ENCODE measurements at regions of chr12 and their contacts with region 1.

Region 1: GRCh38 chr12:110468212-110469048 is at the starts of genes FAM216A and GPN3:
- DNase-seq: peak; percentile 96
- H3K4me3 Mint-ChIP-seq: peak within 1 kb of the TSS; percentile 96
- H3K27ac Mint-ChIP-seq: peak within 1 kb of the TSS; percentile 95
- H3K4me1 Mint-ChIP-seq: peaks cover 31% of the 10 kb centered on the region
- H3K27me3 Mint-ChIP-seq: no peaks in the 10 kb centered on the region
- total RNA-seq, gene FAM216A: 40.8 and 45.9 TPM in 2 replicates
- total RNA-seq, gene GPN3: 50.3 and 55.5 TPM in 2 replicates

Region 2: DNA sequence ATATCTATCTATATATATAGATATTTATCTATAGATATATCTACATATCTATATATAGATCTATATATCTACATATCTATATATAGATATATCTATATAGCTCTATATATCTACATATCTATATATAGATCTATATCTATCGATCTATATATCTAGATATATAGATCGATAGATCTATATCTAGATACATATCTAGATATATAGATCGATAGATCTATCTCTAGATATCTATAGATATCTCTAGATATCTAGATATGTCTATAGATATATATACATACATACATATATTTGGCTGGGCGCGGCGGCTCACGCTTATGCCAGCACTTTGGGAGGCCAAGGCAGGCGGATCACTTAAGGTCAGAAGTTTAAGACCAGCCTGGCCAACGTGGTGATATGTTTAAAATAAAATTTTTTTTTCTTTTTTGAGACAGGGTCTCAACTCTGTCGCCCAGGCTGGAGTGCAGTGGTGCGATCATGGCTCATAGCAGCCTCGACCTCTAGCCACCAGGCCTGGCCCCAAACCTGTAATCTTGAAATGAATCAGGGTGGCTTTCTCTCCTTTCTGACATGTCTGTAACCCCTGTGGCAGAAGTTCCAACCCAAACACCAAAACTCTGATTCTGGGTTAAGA is 36.4 kb before region 1 on chr12:
- intact Hi-C with region 1: loop called (anchors 1 kb)
- DNase-seq: no peak
- H3K4me3 Mint-ChIP-seq: no peak overlapping the region
- H3K27ac Mint-ChIP-seq: no peak overlapping the region
- H3K4me1 Mint-ChIP-seq: no peaks in the 10 kb centered on the region
- H3K27me3 Mint-ChIP-seq: peaks cover 4% of the 10 kb centered on the region

Region 3: GRCh38 chr12:110555577-110556406 is 87.4 kb after region 1 on chr12:
- intact Hi-C with region 1: loop called (anchors 1 kb)
- DNase-seq: no peak
- H3K4me3 Mint-ChIP-seq: no peak overlapping the region
- H3K27ac Mint-ChIP-seq: peak overlapping the region; percentile 57
- H3K4me1 Mint-ChIP-seq: peaks cover 58% of the 10 kb centered on the region
- H3K27me3 Mint-ChIP-seq: no peaks in the 10 kb centered on the region

Region 4: DNA sequence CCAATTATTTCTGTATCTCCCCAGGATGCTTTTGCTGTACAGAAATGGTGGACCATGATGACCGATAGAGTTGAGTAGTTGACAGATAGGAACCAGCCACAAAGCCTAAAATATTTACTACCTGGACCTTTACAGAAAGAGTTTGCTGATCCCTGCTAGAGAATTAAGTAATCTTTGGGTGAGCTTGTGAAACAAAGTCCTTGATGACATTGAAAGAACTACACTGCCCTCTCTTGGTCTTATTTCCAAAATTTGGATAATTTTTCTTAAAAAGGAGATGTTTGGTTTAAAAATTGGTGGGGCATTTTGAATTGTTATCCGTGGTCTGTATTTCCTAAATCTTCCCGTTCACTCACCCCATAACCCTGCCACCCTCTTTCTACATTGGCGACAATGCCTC is 131.8 kb after region 1 on chr12:
- intact Hi-C with region 1: loop called (anchors 1 kb)
- DNase-seq: no peak
- H3K4me3 Mint-ChIP-seq: no peak overlapping the region
- H3K27ac Mint-ChIP-seq: no peak overlapping the region
- H3K4me1 Mint-ChIP-seq: peaks cover 12% of the 10 kb centered on the region
- H3K27me3 Mint-ChIP-seq: no peaks in the 10 kb centered on the region

Region 5: DNA sequence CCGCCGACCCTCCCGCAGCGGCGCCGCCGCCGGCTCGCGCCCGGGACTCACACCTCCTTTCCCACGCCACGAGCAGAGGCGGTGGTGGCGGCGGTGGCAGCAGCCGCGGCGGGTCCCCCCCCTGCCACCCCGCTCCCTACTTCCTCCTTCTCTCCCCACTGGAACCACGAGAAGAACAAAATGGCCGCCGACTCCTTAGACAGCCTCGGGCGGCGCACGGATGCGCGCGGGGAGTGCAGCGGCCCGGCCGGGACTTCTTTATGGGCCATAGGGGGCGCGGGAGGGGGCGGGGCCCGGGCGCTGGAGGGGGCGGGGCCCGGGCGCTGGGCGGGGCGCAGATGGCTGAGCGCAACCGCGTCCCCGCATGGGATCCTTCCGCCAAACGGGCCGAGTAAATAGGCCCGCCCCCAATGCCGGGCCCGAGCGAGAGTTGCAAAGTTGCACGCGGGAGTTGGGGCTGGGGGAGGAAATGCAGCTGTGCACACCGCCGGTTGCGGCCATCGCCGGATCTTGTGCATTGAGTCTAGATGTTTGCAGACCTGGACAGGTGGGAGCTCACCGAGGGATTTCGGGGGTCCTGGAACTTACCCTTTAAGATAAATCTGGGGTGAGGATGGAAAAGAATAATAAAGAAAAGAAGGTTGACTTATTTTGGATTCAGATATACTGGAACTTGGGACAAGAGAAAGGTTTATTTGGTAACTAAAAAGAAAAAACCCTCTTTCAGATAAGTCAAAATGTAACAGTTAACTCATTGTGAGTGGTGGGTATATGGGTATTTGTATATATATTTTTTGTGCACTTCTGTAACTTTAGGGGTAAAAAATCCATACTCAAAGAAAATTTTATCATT is 274.5 kb after region 1 on chr12 and contains the start of gene PPP1CC:
- intact Hi-C with region 1: loop called (anchors 2 kb)
- DNase-seq: peak; percentile 88
- H3K4me3 Mint-ChIP-seq: peak within 1 kb of the TSS; percentile 100
- H3K27ac Mint-ChIP-seq: peak within 1 kb of the TSS; percentile 99
- H3K4me1 Mint-ChIP-seq: peaks cover 45% of the 10 kb centered on the region
- H3K27me3 Mint-ChIP-seq: no peaks in the 10 kb centered on the region
- total RNA-seq, gene PPP1CC: 449 and 469 TPM in 2 replicates

Measured in activated T-helper 1 cell treated with anti-CD3 and anti-CD28 coated beads, Interleukin-12 subunit alpha, Interleukin-12 subunit beta, Interleukin-2, Interleukin-4 antibody, amounts not matched to agents 30 ng/mL and 10 ng/mL and 1 ng/mL, durations not matched to agents 14 hours and 24 hours and 36 hours (primary cell).